ENCODE measurements at regions of chr9 and their contacts with region 1.

Region 1: DNA sequence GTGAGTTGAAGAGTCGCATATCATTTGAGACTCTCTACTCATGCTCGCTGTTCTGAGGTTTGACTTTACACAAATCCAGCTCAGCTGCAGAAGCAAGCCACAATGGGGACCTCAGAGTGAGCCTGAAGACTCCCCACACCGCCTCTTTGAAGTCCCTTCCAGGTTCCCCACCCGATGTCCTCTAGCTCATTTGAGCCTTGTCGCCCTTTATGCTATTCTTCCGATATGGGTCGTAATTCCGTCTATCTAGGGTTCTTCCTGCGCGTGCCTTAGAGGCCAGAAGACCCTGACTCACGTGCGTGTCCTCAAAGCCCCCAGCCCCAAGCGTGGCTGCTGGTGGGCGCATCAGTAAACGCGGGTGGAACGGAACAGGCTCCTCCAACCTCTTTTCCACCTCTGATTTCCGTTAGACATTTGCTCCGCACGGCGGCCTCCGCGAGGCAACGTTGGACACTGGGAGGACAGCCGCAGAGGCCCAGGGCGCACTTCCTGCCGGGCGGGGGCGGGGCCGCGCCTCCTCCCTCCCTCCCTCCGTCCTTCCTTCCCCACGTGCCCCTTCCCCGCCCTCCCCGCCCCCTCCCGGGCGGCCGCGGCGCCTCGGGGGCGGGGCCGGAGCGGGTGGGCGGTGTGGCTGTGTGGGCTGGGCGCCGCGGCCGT is at the start of gene SNX30:
- DNase-seq: peak; percentile 95
- total RNA-seq, gene SNX30: 4.5 TPM

Region 2: GRCh38 chr9:112680731-112681402 is 69.4 kb before region 1 on chr9:
- intact Hi-C with region 1: no loop called
- DNase-seq: no peak

Region 3: DNA sequence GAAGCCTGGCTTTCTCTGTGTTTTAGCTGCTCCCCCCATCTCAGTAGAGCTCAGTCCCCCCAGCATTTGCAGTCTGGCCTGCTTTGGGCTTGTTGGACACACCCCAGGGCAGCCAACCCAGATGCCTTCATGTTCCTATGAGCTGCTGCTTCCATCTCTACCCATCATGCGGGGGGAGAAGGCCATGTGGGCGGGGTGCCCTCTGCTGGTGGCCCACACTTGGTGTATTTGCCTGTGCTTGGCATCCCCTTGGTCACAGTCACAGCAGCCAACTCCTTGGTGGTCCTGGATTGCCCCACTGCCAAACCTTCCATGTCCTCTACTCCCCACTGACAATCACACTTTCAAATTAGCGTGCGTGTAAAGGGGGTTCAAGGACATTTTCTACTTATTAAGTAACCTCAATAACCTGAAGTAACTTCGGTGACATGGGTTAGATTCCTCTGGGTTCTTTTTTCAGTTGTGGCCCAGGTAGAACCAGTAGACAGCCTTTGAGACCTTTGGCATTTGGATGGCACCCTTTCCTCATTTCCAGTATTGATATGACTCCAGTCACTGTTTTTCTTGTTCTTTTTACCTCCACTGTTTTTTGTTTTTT is 43.1 kb after region 1 on chr9:
- intact Hi-C with region 1: loop called (anchors 5 kb)
- DNase-seq: peak; percentile 83

Region 4: GRCh38 chr9:112819635-112820496 is 69.6 kb after region 1 on chr9:
- intact Hi-C with region 1: loop called (anchors 5 kb)
- DNase-seq: no peak

Region 5: DNA sequence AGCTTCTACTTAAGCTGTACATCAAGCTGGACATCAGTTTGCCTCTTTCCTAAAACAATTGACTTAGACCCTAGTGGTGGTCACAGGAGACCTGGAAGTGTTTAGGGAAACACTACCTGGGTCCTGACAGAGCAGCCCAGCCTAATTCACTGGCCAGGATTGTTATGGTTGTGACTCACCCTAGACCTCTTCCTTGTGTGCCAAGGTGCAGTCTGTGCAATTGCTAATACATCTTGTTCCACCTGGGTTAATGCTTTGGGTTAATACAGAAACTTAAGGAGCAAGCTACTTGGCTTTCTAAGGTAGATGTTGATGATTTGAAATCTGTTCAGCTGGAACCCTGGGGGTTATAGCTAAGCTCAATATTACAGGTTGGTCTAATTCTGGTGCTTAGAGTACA is 189.2 kb after region 1 on chr9:
- intact Hi-C with region 1: no loop called
- DNase-seq: no peak